ENCODE measurements at regions of chr15 and their contacts with region 1.

Region 1: DNA sequence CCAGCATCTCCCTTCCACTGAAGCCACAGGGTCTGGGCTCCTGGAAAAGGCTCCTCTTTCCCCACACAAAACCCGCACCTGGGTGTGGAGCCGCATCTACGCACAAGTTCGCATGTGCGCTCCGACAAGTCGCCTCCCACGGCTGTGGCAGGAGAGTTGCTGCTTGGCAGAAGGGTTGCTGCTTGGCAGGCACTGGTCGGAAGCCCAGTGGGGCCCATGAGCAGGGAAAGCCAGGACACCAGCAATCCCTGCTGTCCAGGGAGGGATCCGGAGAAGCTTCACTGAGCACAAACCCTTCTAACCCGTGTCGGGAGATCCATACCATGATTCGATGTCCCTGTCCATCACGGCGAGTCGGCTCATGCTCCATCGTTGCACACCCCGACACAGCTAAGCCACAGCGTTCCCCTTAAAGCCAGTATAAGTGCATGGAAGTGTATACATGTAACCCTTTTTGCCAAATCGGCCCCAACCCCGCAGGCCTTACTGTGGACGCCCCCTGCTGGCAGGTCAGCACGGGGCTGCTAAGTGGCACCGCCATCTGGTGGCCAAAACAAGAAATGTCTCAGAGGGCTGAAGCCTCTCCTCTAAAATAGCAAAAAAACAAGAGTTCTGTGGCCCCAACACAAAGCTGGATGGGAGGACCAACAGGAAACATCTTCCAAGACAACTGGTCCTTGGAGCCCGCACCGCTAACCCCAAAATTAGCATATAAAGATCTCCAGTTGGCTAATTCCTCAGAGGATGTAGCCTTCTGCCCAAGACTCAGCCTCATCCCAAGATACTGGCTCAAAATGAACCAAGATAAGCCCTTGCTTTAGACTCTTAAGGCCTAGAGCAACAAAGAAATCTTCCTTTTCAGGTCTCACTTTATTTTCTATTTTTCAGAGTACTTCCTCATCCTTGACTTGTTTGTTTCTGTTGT is 8.3 kb downstream of the ANKRD63 start:
- DNase-seq: peak; percentile 86 to 93 (median 91)
- H3K4me3 ChIP-seq: no peak overlapping the region
- H3K27ac ChIP-seq: no peak overlapping the region
- H3K4me1 ChIP-seq: peaks cover 0 to 42% (median 23%) of the 10 kb centered on the region in 4 experiments
- H3K27me3 ChIP-seq: no peaks in the 10 kb centered on the region

Region 2: DNA sequence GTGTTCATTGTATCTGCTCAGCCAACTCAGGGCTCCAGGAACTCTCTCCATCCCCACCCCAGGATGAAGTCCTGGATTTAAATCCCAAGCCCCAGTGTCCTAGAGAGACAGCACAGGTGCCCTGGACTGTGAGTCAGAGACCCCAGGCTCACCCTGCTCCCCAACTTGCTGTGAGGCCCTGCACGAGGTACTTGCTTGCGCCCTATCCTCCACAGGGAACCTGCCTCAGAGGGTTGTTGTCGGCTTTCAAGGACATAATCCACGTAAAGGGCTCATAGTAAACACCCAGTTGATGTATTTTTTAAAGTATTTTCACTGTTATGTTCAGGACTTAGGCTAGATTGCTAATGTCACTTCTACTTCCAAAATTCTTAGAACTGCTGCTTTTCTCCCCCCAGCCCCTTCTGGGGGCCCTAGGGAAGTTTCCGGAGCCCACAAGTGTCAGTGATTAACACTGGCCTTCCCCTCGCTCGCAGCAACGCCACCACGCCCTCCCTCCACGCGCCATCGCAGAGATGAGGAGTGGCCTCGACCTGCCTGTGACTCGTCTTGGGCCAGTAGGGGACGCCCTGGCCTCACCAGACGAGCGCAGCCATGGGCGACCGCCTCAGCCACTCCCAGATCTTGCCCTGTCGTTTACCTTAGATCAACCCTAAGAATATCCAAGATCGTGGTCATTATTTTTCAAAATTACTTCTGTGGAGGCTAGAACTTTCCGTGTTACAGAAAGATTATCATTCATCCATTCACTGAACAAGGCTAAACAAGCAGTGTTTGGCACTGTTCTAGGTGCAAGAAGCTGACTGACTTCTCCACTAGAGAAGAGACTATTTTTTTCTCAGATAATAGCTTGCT is 229.7 kb before region 1 on chr15:
- CTCF ChIA-PET with region 1: interaction called, 75 read pairs
- POLR2A ChIA-PET with region 1: no interaction called
- DNase-seq: peak; percentile 84 to 88 (median 84)
- H3K4me3 ChIP-seq: peak overlapping the region in 4 of 7 experiments; percentile 37 to 65 (median 46)
- H3K27ac ChIP-seq: peak overlapping the region in 1 of 2 experiments; percentile 59
- H3K4me1 ChIP-seq: peaks cover 13 to 62% (median 55%) of the 10 kb centered on the region in 4 experiments
- H3K27me3 ChIP-seq: no peaks in the 10 kb centered on the region

Region 3: DNA sequence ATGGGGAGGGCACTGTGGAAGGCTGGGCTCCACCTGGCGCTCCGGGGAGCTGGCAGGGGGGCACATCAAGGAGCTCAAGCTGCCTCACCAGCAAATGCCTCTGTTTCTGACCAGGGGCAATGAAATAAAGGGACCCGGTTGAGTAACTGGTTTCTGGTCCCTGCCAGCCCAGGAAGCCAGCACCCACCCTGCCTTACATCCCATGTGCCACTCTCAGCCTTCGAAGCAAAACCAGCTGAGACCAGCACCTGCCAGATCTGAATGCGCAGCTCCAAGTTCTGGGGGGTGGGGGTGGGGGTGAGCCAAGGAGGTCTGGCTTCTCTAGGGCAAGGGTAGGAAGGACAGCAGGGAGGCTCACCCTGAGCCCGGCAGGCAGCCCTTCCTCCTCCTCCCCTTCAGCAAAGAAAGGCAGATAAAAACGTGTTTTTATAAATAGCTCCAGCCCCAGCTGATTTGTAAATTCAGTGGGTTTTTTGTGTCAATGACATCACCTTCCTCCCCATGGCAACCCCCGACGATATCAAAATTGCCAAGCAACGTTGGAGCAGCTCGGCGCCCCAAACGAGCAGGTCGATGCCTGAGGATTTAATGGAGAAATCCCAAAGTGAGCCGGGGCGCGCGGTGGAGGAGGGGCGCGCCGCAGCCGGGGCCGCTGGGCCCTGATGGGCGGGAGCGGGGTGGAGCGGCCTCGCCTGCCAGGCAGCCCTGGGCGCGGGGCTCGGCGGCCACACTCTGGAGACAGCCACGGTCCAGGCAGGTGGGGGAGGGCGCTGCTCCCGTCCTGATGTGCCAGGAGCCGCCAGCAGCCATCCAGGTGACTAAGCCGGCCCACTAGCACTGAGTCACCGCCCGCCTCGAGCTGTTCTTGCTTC is 35.8 kb before region 1 on chr15 and contains the start of gene PAK6:
- CTCF ChIA-PET with region 1: interaction called, 98 read pairs
- POLR2A ChIA-PET with region 1: no interaction called
- DNase-seq: peak; percentile 58 to 82 (median 75)
- H3K4me3 ChIP-seq: peak within 1 kb of the TSS; percentile 13 to 68 (median 31)
- H3K27ac ChIP-seq: no peak within 1 kb of the TSS
- H3K4me1 ChIP-seq: peaks cover 4 to 29% (median 26%) of the 10 kb centered on the region in 4 experiments
- H3K27me3 ChIP-seq: peaks cover 0 to 15% (median 2%) of the 10 kb centered on the region in 5 experiments

Region 4: DNA sequence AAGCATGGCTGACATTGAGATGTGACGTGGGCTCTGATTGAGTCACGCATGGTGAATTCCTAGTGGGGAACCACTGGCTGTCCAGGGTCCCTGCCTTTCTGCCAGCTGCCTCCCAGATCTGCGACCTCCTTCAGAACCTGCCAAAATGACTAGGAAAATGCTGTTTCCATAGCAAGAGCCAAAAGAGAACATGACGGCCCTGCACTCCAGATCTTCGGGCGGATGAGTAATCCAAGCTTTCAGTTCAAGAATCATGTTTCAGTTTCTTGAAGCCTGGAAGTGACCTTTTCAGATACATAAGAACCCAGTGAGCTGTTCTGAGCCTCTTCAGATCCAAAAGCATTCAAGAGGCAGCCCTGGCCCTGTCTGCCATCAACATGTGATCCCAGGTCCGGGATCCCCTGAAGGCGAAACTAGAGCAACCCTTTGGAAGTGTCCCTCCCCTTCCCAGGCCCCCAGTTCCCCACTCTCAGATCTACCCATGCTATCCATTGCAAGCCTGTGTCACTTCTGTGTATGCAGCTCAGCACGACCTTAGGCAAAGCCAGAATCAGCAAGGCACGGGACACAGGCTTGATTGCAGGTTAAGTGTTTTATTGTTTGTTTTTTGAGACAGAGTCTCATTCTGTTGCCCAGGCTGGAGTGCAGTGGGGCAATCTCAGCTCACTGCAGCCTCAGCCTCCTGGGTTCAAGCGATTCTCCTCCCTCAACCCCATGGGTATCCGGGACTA is 11.4 kb before region 1 on chr15:
- CTCF ChIA-PET with region 1: interaction called, 49 read pairs
- POLR2A ChIA-PET with region 1: interaction called, 3 read pairs
- DNase-seq: no peak
- H3K4me3 ChIP-seq: no peak overlapping the region
- H3K27ac ChIP-seq: no peak overlapping the region
- H3K4me1 ChIP-seq: peaks cover 0 to 6% (median 0%) of the 10 kb centered on the region in 4 experiments
- H3K27me3 ChIP-seq: peaks cover 0 to 4% (median 0%) of the 10 kb centered on the region in 5 experiments

Region 5: GRCh38 chr15:40323239-40323952 is 48.8 kb after region 1 on chr15 and contains the start of gene INAFM2:
- CTCF ChIA-PET with region 1: interaction called, 337 read pairs
- POLR2A ChIA-PET with region 1: no interaction called
- DNase-seq: peak; percentile 96 to 98 (median 98)
- H3K4me3 ChIP-seq: peak within 1 kb of the TSS; percentile 41 to 84 (median 81)
- H3K27ac ChIP-seq: peak within 1 kb of the TSS in 1 of 2 experiments; percentile 59
- H3K4me1 ChIP-seq: peaks cover 32 to 64% (median 59%) of the 10 kb centered on the region in 4 experiments
- H3K27me3 ChIP-seq: no peaks in the 10 kb centered on the region

Measured in common myeloid progenitor, CD34-positive (primary cell).